ENCODE measurements at regions of chr1 and their contacts with region 1.

Region 1: DNA sequence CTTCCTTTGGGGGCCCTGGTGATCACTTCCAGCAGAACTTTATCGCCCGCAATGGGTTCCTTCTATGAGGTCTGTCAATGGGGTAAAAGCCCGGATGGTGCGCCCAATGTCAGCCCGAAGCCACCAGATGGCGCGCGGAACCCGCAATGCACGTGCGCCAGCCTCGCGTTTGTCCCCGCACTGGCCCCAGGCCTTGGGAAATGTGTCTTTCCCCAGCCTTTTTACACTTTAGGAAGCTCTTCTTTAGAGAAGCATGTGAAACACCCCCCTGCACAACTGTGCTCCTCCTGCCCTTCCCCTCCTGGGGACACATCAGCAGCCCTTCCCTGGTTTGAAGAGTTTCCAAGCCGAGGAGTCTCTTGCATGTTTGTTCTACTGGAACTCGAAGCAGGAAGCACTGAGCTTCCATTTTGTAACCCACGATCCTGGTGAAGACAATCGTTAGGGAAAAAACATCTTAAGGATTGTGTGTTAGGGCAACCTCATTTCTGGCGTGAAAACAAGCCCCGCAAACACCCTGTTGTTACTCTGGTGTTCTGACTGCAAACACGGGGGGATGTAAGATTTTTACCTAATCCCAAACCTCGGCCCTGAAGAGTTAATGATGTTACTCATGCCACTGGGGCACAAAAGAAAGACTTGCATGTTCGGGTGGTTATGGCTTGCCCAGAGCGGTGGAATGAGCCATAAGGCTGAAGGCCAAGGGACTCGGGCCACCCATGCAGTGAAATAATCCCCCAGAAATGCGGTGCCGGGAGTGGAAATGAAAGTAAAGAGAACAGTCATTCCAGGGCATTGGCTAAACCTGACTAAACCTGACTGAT is 20.4 kb upstream of the TARBP1 start:
- DNase-seq: peak; percentile 92
- H3K4me3 ChIP-seq: peak overlapping the region; percentile 26
- H3K27ac ChIP-seq: peak overlapping the region; percentile 91
- H3K4me1 ChIP-seq: peaks cover 41% of the 10 kb centered on the region
- H3K27me3 ChIP-seq: no peaks in the 10 kb centered on the region
- CTCF ChIP-seq: peak; percentile 98

Region 2: DNA sequence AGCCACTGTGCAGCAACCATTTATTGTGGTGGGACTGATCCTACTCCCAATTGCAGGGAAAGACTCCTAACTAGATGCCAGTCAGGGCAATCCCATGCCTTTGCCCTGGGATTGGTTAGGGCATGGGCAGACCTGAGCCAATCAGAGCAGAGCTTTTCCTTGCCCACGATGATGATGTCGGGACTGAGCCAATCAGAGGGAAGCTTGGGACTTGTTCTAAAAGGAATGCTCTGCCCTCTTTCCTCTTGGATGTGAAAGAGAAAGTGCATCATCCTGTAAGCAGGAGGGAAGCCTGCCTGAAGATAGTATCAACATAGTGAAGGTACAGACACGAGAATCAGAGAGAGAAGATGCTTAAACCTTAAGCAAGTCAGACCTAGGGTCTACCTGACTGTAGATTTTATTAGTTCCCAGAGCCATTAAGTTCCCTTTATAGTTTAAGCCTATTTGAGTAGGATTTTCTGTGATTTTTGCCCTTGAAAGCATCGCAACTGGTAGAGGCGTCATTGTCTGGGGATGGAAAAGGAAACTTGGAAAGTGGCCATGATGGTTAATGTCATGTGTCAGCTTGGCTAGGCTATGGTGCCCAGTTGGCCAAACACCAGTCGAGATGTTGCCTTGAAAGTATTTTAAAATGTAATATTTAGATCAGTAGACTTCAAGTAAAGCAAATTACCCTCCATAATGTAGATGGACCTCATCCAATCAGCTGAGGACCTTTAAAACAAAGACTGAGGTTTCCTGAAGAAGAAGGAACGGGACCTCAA is 90.7 kb after region 1 on chr1:
- intact Hi-C with region 1: loop called (anchors 5 kb)
- DNase-seq: no peak
- H3K4me3 ChIP-seq: no peak overlapping the region
- H3K27ac ChIP-seq: peak overlapping the region; percentile 63
- H3K4me1 ChIP-seq: peaks cover 38% of the 10 kb centered on the region
- H3K27me3 ChIP-seq: no peaks in the 10 kb centered on the region
- CTCF ChIP-seq: no peak

Region 3: DNA sequence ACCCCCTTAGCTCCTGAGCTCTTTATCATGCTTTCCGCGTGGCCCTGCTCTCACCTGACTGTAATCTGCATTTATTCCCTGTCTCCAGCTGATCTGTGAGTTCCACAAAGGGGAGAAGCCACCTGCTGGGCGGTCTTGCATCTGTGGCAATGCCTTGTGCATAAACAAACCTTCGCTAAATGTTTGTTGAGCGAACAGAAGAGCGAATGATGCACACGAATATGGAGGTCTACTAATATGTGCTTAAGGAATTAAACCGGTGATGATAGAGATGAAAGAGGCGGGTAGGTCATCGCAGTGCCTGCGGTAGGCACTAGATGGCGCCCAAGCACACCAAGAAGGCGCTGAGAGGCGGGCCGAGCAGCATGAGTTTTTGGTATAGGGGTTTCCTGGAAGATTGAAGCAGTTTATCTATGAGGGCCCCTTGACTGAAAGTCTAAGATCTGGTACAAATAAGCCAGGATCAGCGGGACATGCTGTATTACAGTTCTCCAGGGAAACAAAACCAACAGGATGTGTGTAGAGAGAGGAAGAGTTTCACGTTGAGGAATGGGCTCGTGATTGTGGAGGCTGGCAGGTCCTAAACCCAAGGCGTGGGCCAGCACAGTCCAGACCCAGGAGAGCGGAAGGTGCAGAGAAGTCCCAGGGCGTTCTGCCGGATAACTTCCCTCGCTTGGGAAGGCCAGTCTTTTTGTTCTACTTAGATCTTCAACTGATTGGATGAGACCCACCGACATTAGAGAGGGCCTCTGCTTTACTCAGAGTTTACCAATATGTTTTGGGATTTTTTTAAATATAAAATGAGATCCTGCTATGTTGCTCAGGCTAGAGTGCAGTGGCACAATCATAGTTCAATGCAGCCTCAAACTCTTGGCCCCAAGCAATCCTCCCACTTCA is 594.6 kb after region 1 on chr1:
- intact Hi-C with region 1: loop called (anchors 5 kb)
- DNase-seq: peak; percentile 77
- H3K4me3 ChIP-seq: peak overlapping the region; percentile 59
- H3K27ac ChIP-seq: peak overlapping the region; percentile 57
- H3K4me1 ChIP-seq: peaks cover 15% of the 10 kb centered on the region
- H3K27me3 ChIP-seq: no peaks in the 10 kb centered on the region
- CTCF ChIP-seq: peak; percentile 90

Measured in left ventricle myocardium inferior (tissue), 1 donor.